ENCODE measurements at regions of chr2 and their contacts with region 1.

Region 1: GRCh38 chr2:237122214-237122666 is 36.6 kb downstream of the COPS8 start:
- DNase-seq: no peak
- ATAC-seq: peak; percentile 99
- H3K4me3 ChIP-seq: no peak overlapping the region
- H3K27ac ChIP-seq: no peak overlapping the region
- H3K4me1 ChIP-seq: no peaks in the 10 kb centered on the region
- H3K27me3 ChIP-seq: no peaks in the 10 kb centered on the region
- CTCF ChIP-seq: peak; percentile 61 to 67 (median 64)
- EP300 ChIP-seq: no peak
- POLR2A ChIP-seq: no peak
- RAD21 ChIP-seq: peak; percentile 63

Region 2: DNA sequence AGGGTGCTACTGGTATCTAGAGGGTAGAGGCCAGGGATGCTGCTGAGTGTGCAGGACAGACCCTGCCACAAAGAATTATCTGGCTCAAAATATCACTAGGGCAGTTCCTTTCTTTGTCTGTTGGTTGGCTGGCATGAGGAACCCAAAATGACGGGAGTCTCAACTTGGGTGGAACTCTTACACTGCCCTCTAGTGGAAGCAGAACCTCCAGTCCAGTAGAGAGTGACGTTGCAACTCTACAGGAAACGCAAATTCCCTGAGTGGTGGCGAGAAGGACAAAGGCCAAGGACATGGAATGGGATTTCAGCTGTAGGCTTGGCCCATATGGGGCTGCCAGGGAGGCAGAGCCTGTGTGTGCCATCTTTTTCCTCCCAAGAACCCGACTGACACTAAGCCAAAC is 10.6 kb after region 1 on chr2:
- CTCF ChIA-PET with region 1: interaction called, 18 read pairs
- POLR2A ChIA-PET with region 1: no interaction called
- RAD21 ChIA-PET with region 1: no interaction called
- SMC1A ChIA-PET with region 1: interaction called, 10 read pairs
- in situ Hi-C with region 1: no loop called
- intact Hi-C with region 1: no loop called
- DNase-seq: no peak
- ATAC-seq: peak; percentile 63
- H3K4me3 ChIP-seq: no peak overlapping the region
- H3K27ac ChIP-seq: no peak overlapping the region
- H3K4me1 ChIP-seq: no peaks in the 10 kb centered on the region
- H3K27me3 ChIP-seq: no peaks in the 10 kb centered on the region
- CTCF ChIP-seq: peak; percentile 43 to 52 (median 50); a peak in 5 of 6 replicates
- EP300 ChIP-seq: no peak
- POLR2A ChIP-seq: no peak
- RAD21 ChIP-seq: 0 out of 2 replicates have a peak, but pooled peaks have one; percentile 16

Measured in GM12878 (cell line).